Gastrocnemius medialis (tissue), 4 donors: ENCODE measurements at regions of chr17 and their contacts with region 1.

Region 1: DNA sequence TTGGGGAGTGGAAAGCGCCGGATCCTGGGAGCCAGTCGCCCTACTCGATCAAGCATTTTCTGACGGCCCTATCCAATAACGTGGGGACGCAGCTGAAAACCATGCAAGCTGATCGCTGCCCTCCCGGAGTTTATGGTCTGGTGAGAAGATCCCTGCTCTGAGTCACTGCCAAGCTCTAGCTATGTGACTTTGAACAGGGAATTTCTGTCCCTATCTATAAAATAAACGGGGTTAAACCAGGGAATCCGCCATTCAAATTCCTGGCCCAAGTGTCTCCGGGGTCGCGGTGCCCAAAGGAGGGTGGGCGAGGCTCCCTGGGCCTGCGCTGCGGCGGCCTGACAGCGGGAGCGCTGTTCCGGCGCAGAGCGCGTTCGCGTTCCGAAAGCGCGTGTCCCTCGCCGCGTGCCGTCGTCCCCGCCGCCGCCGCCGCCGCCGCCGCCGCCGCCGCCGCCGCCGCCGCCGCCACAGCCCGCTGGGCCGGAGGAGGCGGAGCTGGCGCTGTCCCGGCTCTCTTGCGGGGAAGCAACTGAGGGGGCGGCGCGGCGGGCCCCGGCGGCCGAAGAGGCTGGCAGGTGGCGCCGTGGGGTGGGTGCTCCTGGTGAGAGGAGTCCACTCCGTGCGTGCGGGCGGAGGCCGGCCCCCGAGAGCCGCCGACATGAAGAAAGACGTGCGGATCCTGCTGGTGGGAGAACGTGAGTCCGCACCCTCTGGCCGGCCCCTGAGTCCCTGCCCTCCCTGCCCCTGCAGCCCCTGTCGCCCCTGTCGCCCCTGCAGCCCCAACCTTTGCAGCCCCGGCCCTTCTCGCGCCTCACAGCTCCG is at the start of gene RHOT1:
- DNase-seq: peak; percentile 47 to 69
- ATAC-seq: peak; percentile 75 to 76
- H3K4me3 ChIP-seq: peak within 1 kb of the TSS; percentile 71 to 96 (median 88)
- H3K27ac ChIP-seq: peak within 1 kb of the TSS; percentile 89 to 98 (median 92)
- H3K4me1 ChIP-seq: peaks cover 20 to 27% of the 10 kb centered on the region in 2 donors
- H3K27me3 ChIP-seq: no peaks in the 10 kb centered on the region
- CTCF ChIP-seq: peak; percentile 70 to 81 (median 75)
- POLR2A ChIP-seq: peak; percentile 65 to 70
- total RNA-seq, gene RHOT1: 30.8 to 67.5 (median 36.2) TPM

Region 2: GRCh38 chr17:32006957-32007462 is 135.2 kb before region 1 on chr17 and contains the start of gene LRRC37B:
- in situ Hi-C with region 1: loop called in 2 of 4 experiments (anchors 5 to 10 kb)
- intact Hi-C with region 1: loop called (anchors 2 kb)
- DNase-seq: peak; percentile 75 to 84
- ATAC-seq: peak; percentile 93 to 94
- H3K4me3 ChIP-seq: peak within 1 kb of the TSS; percentile 82 to 93 (median 88)
- H3K27ac ChIP-seq: peak within 1 kb of the TSS; percentile 82 to 92 (median 85)
- H3K4me1 ChIP-seq: peaks cover 15 to 21% of the 10 kb centered on the region in 2 donors
- H3K27me3 ChIP-seq: no peaks in the 10 kb centered on the region
- CTCF ChIP-seq: peak; percentile 78 to 98 (median 95)
- POLR2A ChIP-seq: peak in 1 of 2 donors; percentile 33
- total RNA-seq, gene LRRC37B: 3.8 to 7.9 (median 5.6) TPM

Region 3: GRCh38 chr17:32015245-32016013 is 126.8 kb before region 1 on chr17:
- in situ Hi-C with region 1: loop called in 1 of 4 experiments (anchors 10 kb)
- intact Hi-C with region 1: no loop called
- DNase-seq: peak; percentile 71 to 76
- ATAC-seq: peak; percentile 78 to 85
- H3K4me3 ChIP-seq: peak overlapping the region in 3 of 4 donors; percentile 1 to 24 (median 7)
- H3K27ac ChIP-seq: peak overlapping the region; percentile 73 to 77 (median 76)
- H3K4me1 ChIP-seq: peaks cover 31 to 34% of the 10 kb centered on the region in 2 donors
- H3K27me3 ChIP-seq: no peaks in the 10 kb centered on the region
- CTCF ChIP-seq: no peak
- POLR2A ChIP-seq: no peak

Region 4: DNA sequence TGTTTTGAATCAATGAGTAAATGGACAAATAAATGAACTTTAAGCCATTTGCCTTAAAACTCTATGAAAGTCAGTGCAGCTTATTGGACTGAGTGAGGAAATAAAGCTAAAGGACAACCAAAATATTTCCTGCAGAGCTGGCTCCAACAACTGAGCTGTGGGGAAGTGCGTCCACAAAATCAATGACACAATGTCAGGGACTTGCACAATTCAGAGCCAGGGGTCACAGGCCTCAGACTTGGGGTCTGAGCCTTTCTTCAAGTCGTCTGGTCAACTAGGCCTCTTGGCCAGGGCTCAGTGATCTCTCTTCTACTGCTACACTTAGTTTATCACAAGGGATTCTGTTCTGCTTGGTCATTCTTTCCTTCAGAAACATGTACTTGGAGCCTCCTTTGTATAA is 97.2 kb after region 1 on chr17:
- in situ Hi-C with region 1: no loop called
- intact Hi-C with region 1: no loop called
- DNase-seq: no peak
- ATAC-seq: no peak
- H3K4me3 ChIP-seq: no peak overlapping the region
- H3K27ac ChIP-seq: no peak overlapping the region
- H3K4me1 ChIP-seq: no peaks in the 10 kb centered on the region
- H3K27me3 ChIP-seq: no peaks in the 10 kb centered on the region
- CTCF ChIP-seq: no peak
- POLR2A ChIP-seq: no peak